Sciatic nerve (tissue), 2 donors: ENCODE measurements at regions of chr1 and their contacts with region 1.

Region 1: GRCh38 chr1:236103646-236104218 is 38.6 kb upstream of the GPR137B start:
- DNase-seq: no peak
- ATAC-seq: peak; percentile 61

Region 2: GRCh38 chr1:236147581-236148469 is 44.1 kb after region 1 on chr1:
- intact Hi-C with region 1: loop called (anchors 1 kb)
- DNase-seq: no peak
- ATAC-seq: no peak

Region 3: GRCh38 chr1:236489710-236490377 is 386.1 kb after region 1 on chr1:
- intact Hi-C with region 1: loop called (anchors 10 kb)
- DNase-seq: no peak
- ATAC-seq: peak; percentile 67